Left ventricle myocardium inferior (tissue), 1 donor: ENCODE measurements at regions of chr1 and their contacts with region 1.

Region 1: DNA sequence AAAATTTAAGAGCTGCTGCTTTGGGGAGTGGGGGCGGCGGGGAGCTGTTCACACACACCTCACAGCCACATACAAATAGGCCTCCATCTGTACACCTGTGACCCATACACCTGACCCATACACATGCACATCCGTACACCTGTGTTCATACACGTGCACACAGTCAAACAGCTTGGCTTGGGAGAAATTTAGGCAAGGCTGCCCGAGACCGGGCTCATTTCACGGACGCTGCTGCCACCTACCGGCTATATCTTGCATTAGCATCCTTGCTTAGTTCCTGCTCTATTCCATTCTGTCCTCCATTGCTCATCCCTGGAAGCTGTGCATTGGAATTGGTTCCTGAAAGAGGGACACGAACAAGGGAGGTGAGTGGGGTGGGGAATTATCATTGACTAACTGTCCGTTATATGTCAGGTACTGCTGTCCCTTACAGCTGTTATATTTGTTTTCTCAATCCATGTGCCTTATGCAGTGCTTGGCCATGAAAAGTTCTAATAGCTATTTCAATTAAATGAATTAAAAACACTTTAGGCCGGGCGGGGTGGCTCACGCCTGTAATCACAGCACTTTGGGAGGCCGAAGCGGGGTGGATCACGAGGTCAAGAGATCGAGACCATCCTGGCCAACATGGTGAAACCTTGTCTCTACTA is 37.1 kb upstream of the EPB41 start:
- DNase-seq: peak; percentile 66
- H3K4me3 ChIP-seq: no peak overlapping the region
- H3K27ac ChIP-seq: no peak overlapping the region
- H3K4me1 ChIP-seq: peaks cover under 1% of the 10 kb centered on the region
- H3K27me3 ChIP-seq: peaks cover 25% of the 10 kb centered on the region
- CTCF ChIP-seq: peak; percentile 93

Region 2: GRCh38 chr1:28779751-28780408 is 97.4 kb before region 1 on chr1:
- intact Hi-C with region 1: loop called (anchors 5 kb)
- DNase-seq: no peak
- H3K4me3 ChIP-seq: no peak overlapping the region
- H3K27ac ChIP-seq: no peak overlapping the region
- H3K4me1 ChIP-seq: peaks cover 6% of the 10 kb centered on the region
- H3K27me3 ChIP-seq: no peaks in the 10 kb centered on the region
- CTCF ChIP-seq: no peak

Region 3: GRCh38 chr1:28887419-28887834 is 10.2 kb after region 1 on chr1:
- intact Hi-C with region 1: no loop called
- DNase-seq: peak; percentile 18
- H3K4me3 ChIP-seq: peak overlapping the region; percentile 84
- H3K27ac ChIP-seq: peak overlapping the region; percentile 80
- H3K4me1 ChIP-seq: peaks cover 50% of the 10 kb centered on the region
- H3K27me3 ChIP-seq: peaks cover 23% of the 10 kb centered on the region
- CTCF ChIP-seq: no peak

Region 4: DNA sequence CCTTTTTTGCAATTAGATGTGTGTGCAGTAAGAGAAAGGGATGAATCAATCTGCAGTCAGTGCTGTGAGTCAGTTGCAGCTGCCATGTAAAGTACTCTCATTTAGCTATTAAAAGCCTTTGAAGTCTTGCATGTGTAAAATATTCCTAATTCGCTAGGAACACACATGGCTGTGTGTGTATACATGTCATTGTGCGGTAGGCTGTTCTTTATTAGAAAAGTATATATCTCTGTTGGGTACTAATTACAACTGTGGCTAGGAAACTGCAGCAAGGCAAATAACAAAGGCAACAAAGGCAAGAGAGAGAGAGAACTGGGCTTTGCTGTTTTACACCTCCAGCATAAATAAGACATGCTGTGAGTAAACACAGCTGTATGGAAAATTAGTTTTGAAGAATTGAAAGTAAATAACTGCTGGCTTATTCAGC is 78.8 kb after region 1 on chr1:
- intact Hi-C with region 1: no loop called
- DNase-seq: no peak
- H3K4me3 ChIP-seq: no peak overlapping the region
- H3K27ac ChIP-seq: no peak overlapping the region
- H3K4me1 ChIP-seq: peaks cover 14% of the 10 kb centered on the region
- H3K27me3 ChIP-seq: no peaks in the 10 kb centered on the region
- CTCF ChIP-seq: no peak

Region 5: DNA sequence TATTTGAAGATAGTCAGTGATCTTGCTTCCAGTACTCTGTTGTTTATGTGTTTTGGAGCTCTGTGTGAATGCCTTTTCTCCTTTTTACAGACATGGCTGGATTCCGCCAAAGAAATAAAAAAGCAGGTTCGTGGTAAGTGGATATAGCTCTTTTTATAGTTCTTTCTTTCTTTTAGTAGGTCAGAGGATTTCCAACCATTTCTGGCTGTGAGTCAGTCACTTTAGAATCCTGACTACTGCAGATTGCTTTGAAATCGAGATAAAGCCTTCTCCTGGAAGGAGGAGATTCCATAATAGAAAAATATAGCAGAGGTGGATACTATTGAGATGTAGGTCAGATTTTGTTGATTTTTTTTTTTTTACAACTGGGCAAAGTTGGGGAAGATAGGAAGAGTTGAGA is 134.5 kb after region 1 on chr1:
- intact Hi-C with region 1: no loop called
- DNase-seq: no peak
- H3K4me3 ChIP-seq: no peak overlapping the region
- H3K27ac ChIP-seq: no peak overlapping the region
- H3K4me1 ChIP-seq: peaks cover 11% of the 10 kb centered on the region
- H3K27me3 ChIP-seq: no peaks in the 10 kb centered on the region
- CTCF ChIP-seq: no peak

Region 6: GRCh38 chr1:29033829-29034466 is 156.7 kb after region 1 on chr1:
- intact Hi-C with region 1: loop called (anchors 5 kb)
- DNase-seq: no peak
- H3K4me3 ChIP-seq: no peak overlapping the region
- H3K27ac ChIP-seq: no peak overlapping the region
- H3K4me1 ChIP-seq: peaks cover 17% of the 10 kb centered on the region
- H3K27me3 ChIP-seq: no peaks in the 10 kb centered on the region
- CTCF ChIP-seq: peak; percentile 69

Region 7: DNA sequence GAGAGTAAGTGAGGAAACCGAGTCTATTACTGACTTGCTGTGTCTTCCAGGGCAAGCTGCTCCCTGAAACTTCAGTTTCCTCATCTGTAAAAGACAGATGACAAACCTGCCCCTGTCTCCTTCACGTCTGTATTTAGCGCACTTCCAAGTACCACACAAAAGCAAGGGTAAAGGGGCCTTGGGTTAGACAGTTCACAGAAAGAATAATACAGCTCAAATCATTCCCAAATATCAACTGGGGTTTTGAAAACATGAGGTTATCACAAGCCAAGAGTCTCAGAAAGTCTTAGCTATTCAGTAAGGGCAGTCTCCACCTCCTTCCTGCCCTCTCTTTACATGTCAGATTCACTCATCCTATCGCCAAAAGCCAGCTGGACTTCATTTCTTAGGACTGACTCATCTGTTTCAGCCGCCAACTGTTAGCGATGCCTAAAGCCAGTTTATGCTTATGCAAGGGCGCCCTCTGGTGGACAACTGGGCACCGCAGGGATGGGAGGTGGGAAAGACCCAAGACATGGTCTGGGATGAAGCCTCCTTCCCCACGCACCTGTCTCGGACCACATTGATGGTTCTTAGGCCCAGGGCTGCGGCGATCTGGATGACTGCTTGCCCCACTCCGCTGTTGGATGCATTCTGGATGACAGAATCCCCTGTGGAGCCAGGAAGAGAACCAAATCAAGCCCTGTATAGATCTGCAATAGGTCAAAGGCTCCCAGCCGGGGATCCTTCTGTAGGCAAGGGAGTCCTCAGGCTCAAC is 325.5 kb after region 1 on chr1:
- intact Hi-C with region 1: loop called (anchors 5 kb)
- DNase-seq: peak; percentile 92
- H3K4me3 ChIP-seq: no peak overlapping the region
- H3K27ac ChIP-seq: peak overlapping the region; percentile 83
- H3K4me1 ChIP-seq: peaks cover 13% of the 10 kb centered on the region
- H3K27me3 ChIP-seq: no peaks in the 10 kb centered on the region
- CTCF ChIP-seq: peak; percentile 98

Region 8: DNA sequence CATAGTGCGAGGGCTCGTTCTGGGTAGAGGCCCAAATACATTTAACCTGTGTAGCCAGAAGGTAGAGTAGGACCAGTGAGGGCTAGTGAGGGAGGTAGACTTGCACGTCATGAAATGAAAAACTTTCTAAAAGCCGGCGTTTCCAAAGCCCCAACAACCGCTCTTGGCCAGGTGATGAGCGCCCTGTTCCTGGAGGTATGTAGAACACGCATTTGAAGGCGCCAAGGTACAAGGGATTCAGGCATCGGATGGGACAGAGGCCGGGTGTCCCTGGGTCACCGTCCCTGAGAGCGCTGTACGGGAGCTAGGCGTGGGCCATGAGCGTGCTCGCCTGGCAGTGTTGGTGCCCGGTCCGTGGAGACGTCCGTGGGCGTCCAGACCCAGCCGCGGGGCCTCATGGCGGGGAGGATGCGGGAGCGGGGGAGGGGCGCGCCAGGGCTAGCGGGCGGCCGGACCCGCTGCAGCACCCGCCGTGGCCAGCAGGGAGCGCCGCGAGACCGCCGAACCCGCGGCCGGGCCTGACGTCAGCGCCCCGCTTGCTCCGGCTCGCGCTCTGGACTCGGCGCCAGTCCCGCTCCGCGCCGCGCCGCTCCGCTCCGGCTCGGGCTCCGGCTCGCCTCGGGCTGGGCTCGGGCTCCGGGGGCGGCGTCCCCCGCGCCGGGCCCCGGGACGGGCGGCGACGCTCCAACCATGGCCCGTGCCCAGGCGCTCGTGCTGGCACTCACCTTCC is 358.9 kb after region 1 on chr1 and contains the start of gene PTPRU:
- intact Hi-C with region 1: no loop called
- DNase-seq: peak; percentile 81
- H3K4me3 ChIP-seq: peak within 1 kb of the TSS; percentile 77
- H3K27ac ChIP-seq: peak within 1 kb of the TSS; percentile 75
- H3K4me1 ChIP-seq: peaks cover 27% of the 10 kb centered on the region
- H3K27me3 ChIP-seq: peaks cover 8% of the 10 kb centered on the region
- CTCF ChIP-seq: peak; percentile 91
- total RNA-seq, gene PTPRU: 15.3 TPM